HCT116 (cell line): ENCODE measurements at regions of chr3 and their contacts with region 1.

Region 1: GRCh38 chr3:44624749-44625480 is at the start of gene ZNF197:
- DNase-seq: peak; percentile 90
- ATAC-seq: peak; percentile 96
- H3K4me3 ChIP-seq: peak within 1 kb of the TSS; percentile 87 to 90
- H3K27ac ChIP-seq: peak within 1 kb of the TSS; percentile 66
- H3K4me1 ChIP-seq: peaks cover 2 to 15% of the 10 kb centered on the region in 2 experiments; a peak in 3 of 4 replicates
- H3K27me3 ChIP-seq: no peaks in the 10 kb centered on the region
- CTCF ChIP-seq: no peak
- POLR2A ChIP-seq: peak; percentile 78
- RAD21 ChIP-seq: no peak
- total RNA-seq, gene ZNF197: 16.5 TPM

Region 2: GRCh38 chr3:44323341-44323955 is 301.5 kb before region 1 on chr3:
- CTCF ChIA-PET with region 1: no interaction called
- POLR2A ChIA-PET with region 1: no interaction called
- RAD21 ChIA-PET with region 1: no interaction called
- intact Hi-C with region 1: loop called (anchors 10 kb)
- DNase-seq: peak; percentile 46
- ATAC-seq: peak; percentile 76
- H3K4me3 ChIP-seq: no peak overlapping the region
- H3K27ac ChIP-seq: no peak overlapping the region
- H3K4me1 ChIP-seq: peaks cover 0 to 4% of the 10 kb centered on the region in 2 experiments; a peak in 1 of 4 replicates
- H3K27me3 ChIP-seq: no peaks in the 10 kb centered on the region
- CTCF ChIP-seq: peak; percentile 78 to 91 (median 81)
- POLR2A ChIP-seq: no peak
- RAD21 ChIP-seq: peak; percentile 84

Region 3: DNA sequence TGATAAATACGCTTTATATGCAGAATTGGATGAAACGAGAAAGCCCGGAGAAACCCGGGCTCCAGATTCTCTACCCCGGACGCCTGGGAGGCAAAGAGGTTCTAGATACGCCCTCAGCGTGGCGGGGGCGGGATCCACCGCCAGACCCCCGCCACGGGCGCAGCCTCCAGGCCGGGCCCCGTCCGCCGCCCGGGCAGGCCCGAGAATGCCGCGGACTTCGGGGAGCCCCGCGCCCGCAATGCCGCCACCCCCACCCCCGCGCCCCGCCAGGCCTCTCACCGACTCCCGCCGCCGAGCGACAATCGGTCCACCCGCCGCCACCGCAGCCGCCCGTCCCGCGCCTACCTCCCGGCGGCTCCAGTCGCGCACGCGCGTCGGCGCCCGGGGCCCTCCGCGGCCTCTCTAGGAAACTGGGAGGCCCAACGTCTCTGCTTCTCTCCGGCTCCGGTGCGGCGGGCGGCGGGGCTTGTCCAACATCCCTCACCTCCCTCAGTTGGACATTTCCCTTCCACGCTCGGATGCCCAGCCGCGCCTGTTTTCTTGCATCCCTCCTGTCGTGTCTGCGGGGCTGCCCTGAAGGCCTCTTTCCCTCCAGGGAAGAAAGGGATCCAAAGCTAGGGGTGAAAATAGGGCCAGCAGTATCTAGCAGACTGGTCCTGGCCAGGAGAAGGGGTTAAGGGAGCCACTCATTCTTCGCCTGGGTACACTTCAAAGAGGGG is 147.4 kb before region 1 on chr3 and contains the start of gene ZNF445:
- CTCF ChIA-PET with region 1: no interaction called
- POLR2A ChIA-PET with region 1: no interaction called
- RAD21 ChIA-PET with region 1: no interaction called
- intact Hi-C with region 1: loop called (anchors 10 kb)
- DNase-seq: peak; percentile 48
- ATAC-seq: peak; percentile 96
- H3K4me3 ChIP-seq: peak within 1 kb of the TSS; percentile 79
- H3K27ac ChIP-seq: no peak within 1 kb of the TSS
- H3K4me1 ChIP-seq: peaks cover 6 to 22% of the 10 kb centered on the region in 2 experiments; a peak in 3 of 4 replicates
- H3K27me3 ChIP-seq: no peaks in the 10 kb centered on the region
- CTCF ChIP-seq: no peak
- POLR2A ChIP-seq: peak; percentile 58
- RAD21 ChIP-seq: no peak
- total RNA-seq, gene ZNF445: 19.9 TPM

Region 4: GRCh38 chr3:44510000-44510368 is 114.9 kb before region 1 on chr3:
- CTCF ChIA-PET with region 1: no interaction called
- POLR2A ChIA-PET with region 1: no interaction called
- RAD21 ChIA-PET with region 1: no interaction called
- intact Hi-C with region 1: loop called (anchors 2 kb)
- DNase-seq: no peak
- ATAC-seq: peak; percentile 27
- H3K4me3 ChIP-seq: peak overlapping the region; percentile 68 to 74
- H3K27ac ChIP-seq: peak overlapping the region; percentile 58
- H3K4me1 ChIP-seq: peaks cover 6 to 17% of the 10 kb centered on the region in 2 experiments; a peak in 3 of 4 replicates
- H3K27me3 ChIP-seq: no peaks in the 10 kb centered on the region
- CTCF ChIP-seq: no peak
- POLR2A ChIP-seq: no peak
- RAD21 ChIP-seq: no peak

Region 5: DNA sequence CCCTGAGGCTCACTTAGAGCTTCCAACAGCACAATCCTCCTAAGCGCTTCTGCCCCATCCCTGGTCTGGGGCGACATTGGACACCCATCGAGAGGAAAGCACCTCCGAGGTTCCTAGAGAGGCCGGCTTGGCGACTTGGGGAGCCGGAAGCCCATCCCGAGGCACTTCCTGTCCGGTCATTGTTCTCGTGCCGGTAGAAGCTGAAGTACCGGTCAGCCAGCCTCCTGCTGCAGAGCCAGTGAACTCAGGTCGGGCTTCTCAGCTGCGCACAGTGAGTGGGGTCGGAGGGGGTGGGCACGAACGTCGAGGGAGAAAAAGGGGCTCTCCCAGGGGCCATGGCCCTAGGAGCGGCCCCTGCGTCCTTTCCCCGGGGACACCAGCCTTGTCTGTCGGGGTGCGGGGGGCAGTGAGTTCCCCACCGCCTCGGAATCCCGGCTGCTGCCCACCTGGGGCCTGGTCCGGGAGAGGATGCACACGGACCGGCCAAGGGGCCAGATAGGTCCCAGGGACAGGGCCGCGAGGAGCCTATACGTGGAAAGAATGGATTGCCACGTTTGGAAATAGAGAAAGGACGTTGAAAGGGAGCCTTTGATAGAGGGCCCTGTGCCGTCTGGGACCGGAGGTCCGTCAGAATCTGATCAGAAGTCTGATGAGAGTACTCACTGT is 23.8 kb after region 1 on chr3 and contains the start of gene ZNF35:
- CTCF ChIA-PET with region 1: no interaction called
- POLR2A ChIA-PET with region 1: interaction called, 5 read pairs
- RAD21 ChIA-PET with region 1: no interaction called
- intact Hi-C with region 1: loop called (anchors 1 kb)
- DNase-seq: peak; percentile 87
- ATAC-seq: peak; percentile 98
- H3K4me3 ChIP-seq: peak within 1 kb of the TSS; percentile 96 to 98
- H3K27ac ChIP-seq: peak within 1 kb of the TSS; percentile 52
- H3K4me1 ChIP-seq: peaks cover 4 to 9% of the 10 kb centered on the region in 2 experiments; a peak in 2 of 4 replicates
- H3K27me3 ChIP-seq: no peaks in the 10 kb centered on the region
- CTCF ChIP-seq: no peak
- POLR2A ChIP-seq: peak; percentile 49
- RAD21 ChIP-seq: no peak
- total RNA-seq, gene ZNF35: 7.9 TPM

Region 6: GRCh38 chr3:44674211-44674610 is 49.3 kb after region 1 on chr3:
- CTCF ChIA-PET with region 1: no interaction called
- POLR2A ChIA-PET with region 1: no interaction called
- RAD21 ChIA-PET with region 1: no interaction called
- intact Hi-C with region 1: no loop called
- DNase-seq: no peak
- ATAC-seq: no peak
- H3K4me3 ChIP-seq: no peak overlapping the region
- H3K27ac ChIP-seq: no peak overlapping the region
- H3K4me1 ChIP-seq: no peaks in the 10 kb centered on the region
- H3K27me3 ChIP-seq: no peaks in the 10 kb centered on the region
- CTCF ChIP-seq: no peak
- POLR2A ChIP-seq: no peak
- RAD21 ChIP-seq: no peak